HepG2 (cell line): ENCODE measurements at regions of chr9 and their contacts with region 1.

Region 1: GRCh38 chr9:116174111-116174746 is 20.6 kb downstream of the PAPPA start:
- DNase-seq: peak; percentile 21
- ATAC-seq: no peak
- H3K4me3 ChIP-seq: no peak overlapping the region
- H3K27ac ChIP-seq: no peak overlapping the region
- H3K4me1 ChIP-seq: no peaks in the 10 kb centered on the region
- H3K27me3 ChIP-seq: no peaks in the 10 kb centered on the region
- CTCF ChIP-seq: no peak
- EP300 ChIP-seq: no peak
- POLR2A ChIP-seq: no peak
- RAD21 ChIP-seq: no peak

Region 2: DNA sequence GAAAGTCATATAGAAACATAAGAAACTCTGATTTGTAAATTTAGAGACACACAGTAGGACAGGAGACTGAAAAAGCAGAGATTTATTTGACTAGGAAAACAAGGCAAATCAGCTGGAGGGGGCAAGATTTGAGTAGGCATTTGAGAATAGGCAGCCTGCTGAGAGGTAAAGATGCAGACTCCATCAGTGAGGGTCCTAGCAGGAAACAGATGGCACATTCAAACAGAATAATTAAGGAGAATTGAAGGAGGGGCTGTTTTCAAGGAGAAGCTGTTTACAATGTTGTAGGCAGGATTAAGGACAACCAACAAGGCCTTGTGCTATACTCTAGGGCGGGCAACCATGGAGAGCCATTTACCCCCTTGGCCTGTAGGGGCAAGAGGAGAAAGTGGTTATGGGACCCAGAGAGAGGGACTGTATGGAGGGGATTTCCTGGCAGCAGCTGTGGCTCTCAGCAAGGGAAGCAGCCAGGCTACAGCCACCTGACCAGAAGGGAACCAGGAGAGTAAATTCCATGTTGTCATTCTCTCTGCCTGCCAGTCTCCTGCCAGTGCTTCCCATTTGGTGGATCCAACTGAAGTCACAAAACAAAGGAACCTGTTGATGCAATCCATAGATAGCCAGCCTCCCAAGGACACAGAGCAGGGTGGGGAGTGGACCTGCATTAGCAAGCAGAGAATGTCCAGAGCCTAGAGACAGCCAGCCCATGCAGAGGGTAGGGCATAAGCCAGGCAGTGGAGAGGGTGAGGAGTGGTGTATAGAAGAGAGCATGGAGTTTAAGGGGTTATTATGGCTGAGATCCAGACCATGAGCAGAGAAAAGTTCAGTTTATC is 17.6 kb after region 1 on chr9:
- CTCF ChIA-PET with region 1: no interaction called
- POLR2A ChIA-PET with region 1: no interaction called
- in situ Hi-C with region 1: no loop called
- intact Hi-C with region 1: loop called (anchors 1 kb)
- DNase-seq: peak; percentile 38
- ATAC-seq: peak; percentile 83
- H3K4me3 ChIP-seq: no peak overlapping the region
- H3K27ac ChIP-seq: no peak overlapping the region
- H3K4me1 ChIP-seq: peaks cover 15% of the 10 kb centered on the region
- H3K27me3 ChIP-seq: 0 out of 5 replicates have a peak, but pooled peaks cover 0 to 5% of the 10 kb centered on the region in 2 experiments
- CTCF ChIP-seq: no peak
- EP300 ChIP-seq: no peak
- POLR2A ChIP-seq: no peak
- RAD21 ChIP-seq: no peak